Gastrocnemius medialis (tissue), 4 donors: ENCODE measurements at regions of chr6 and their contacts with region 1.

Region 1: DNA sequence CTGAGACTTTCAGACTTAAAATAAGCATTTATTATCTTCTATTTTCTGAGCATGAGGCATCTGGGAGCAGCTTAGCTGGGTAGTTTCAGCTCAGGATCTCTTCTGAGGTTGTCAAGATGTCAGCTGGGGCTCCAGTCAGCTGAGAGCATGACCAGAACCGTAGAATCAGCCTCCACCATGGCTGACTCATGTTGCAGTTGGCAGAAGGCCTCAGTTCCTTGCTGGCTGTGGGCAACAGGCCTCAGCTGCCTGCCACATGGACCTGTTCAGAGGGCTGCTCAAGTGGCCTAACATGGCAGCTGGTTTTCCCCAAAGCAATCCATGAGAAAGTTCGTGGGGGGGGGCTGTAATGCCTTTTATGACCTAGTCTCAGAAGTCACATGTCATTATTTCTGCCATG is 142.3 kb downstream of the LY86 start:
- DNase-seq: peak; percentile 93 to 98
- ATAC-seq: peak; percentile 95 to 97
- H3K4me3 ChIP-seq: no peak overlapping the region
- H3K27ac ChIP-seq: peak overlapping the region; percentile 79 to 89 (median 82)
- H3K4me1 ChIP-seq: peaks cover 0 to 22% of the 10 kb centered on the region in 2 donors
- H3K27me3 ChIP-seq: no peaks in the 10 kb centered on the region
- CTCF ChIP-seq: no peak
- POLR2A ChIP-seq: peak in 1 of 2 donors; percentile 34

Region 2: DNA sequence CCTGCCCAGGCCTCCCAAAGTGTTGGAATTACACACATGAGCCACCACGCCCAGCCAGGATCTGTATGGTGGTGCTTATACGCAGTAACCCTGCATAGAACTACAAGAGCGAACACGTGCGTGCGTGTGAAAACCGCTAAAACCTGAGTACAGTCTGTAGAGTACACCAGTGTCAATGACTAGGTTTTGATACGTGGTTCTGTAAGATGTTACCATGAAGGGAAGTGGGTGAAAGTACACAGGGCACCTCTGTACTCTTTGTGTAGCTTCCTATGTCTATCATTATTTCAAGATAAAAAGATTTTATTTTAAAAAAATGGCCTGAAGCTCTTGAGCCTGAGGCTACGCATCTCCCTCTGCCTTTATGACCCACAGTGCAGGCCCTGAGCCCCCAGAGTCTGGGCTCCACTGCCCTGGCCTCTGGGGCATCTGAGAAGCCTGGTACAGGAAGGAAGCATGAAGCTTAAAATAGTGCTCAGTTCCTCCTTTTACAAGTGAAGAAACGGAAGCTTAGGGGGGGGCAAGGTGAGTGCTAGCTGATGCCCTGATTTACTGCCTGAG is 120.7 kb before region 1 on chr6:
- in situ Hi-C with region 1: no loop called
- intact Hi-C with region 1: no loop called
- DNase-seq: no peak
- ATAC-seq: no peak
- H3K4me3 ChIP-seq: no peak overlapping the region
- H3K27ac ChIP-seq: no peak overlapping the region
- H3K4me1 ChIP-seq: no peaks in the 10 kb centered on the region
- H3K27me3 ChIP-seq: no peaks in the 10 kb centered on the region
- CTCF ChIP-seq: no peak
- POLR2A ChIP-seq: no peak

Region 3: GRCh38 chr6:7042056-7042653 is 311.3 kb after region 1 on chr6:
- in situ Hi-C with region 1: no loop called
- intact Hi-C with region 1: loop called (anchors 5 kb)
- DNase-seq: no peak
- ATAC-seq: no peak
- H3K4me3 ChIP-seq: no peak overlapping the region
- H3K27ac ChIP-seq: peak overlapping the region; percentile 75 to 88 (median 84)
- H3K4me1 ChIP-seq: peaks cover 17 to 19% of the 10 kb centered on the region in 2 donors
- H3K27me3 ChIP-seq: no peaks in the 10 kb centered on the region
- CTCF ChIP-seq: no peak
- POLR2A ChIP-seq: no peak

Region 4: DNA sequence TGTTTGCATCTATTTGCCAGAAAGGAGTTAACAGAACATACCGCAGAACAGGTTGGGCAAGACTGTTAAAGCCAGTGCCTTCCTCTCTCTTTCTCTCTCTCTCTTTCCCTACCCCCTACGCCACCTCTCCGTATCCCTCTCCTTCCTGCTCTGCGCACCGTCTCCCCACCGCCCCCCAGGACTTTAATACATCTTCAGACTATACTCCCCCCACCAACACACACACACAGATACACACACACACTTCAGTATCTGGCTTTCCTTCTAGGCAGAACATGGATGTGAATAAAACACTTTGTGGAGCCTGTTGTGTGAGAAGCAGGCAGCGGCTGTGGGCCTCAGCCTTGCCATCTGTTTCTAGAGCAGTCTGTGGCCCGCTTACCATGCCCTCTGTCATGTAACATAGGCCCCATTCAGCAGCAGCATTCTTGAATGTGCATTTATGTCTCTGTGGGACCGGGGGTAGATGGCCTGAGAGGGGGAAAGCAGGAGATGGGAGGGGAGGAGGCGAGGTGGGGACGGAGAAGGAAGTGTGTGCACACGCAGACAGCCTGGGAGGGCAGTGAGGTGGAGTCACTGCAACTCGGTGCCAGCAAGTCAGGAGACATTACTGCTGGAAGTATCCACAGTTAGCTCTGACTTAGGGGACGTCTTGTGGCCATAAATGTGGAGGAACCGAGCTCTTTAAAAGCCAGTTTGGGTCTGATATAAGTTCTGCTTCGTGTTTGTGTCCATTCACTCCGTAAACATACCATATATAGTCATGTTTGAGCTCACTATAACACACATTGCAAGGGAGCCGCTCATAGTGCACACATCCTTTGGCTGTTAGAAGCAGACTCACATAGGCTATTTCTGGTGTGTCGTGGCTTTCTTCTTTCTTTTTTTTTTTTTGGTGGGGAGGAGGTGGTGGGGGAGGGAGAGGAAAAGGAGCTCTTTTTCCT is 415.3 kb after region 1 on chr6:
- in situ Hi-C with region 1: no loop called
- intact Hi-C with region 1: loop called (anchors 5 kb)
- DNase-seq: peak; percentile 61 to 68
- ATAC-seq: peak; percentile 67 to 87
- H3K4me3 ChIP-seq: peak overlapping the region in 2 of 4 donors; percentile 14 to 22
- H3K27ac ChIP-seq: peak overlapping the region; percentile 65 to 96 (median 80)
- H3K4me1 ChIP-seq: peaks cover 59 to 68% of the 10 kb centered on the region in 2 donors
- H3K27me3 ChIP-seq: no peaks in the 10 kb centered on the region
- CTCF ChIP-seq: no peak
- POLR2A ChIP-seq: no peak